Activated T-helper 2 cell treated with anti-CD3 and anti-CD28 coated beads, Interferon-gamma antibody, Interleukin-2, Interleukin-4, amounts not matched to agents 10 μg/mL and 5 μg/mL and 100 μg/mL, durations not matched to agents 14 hours and 24 hours and 36 hours (primary cell): ENCODE measurements at regions of chr5 and their contacts with region 1.

Region 1: GRCh38 chr5:131068893-131069643 is 96.0 kb downstream of the HINT1 start:
- DNase-seq: peak; percentile 69
- H3K4me3 Mint-ChIP-seq: peak overlapping the region; percentile 69
- H3K27ac Mint-ChIP-seq: peak overlapping the region; percentile 89
- H3K4me1 Mint-ChIP-seq: peaks cover 53% of the 10 kb centered on the region
- H3K27me3 Mint-ChIP-seq: no peaks in the 10 kb centered on the region

Region 2: DNA sequence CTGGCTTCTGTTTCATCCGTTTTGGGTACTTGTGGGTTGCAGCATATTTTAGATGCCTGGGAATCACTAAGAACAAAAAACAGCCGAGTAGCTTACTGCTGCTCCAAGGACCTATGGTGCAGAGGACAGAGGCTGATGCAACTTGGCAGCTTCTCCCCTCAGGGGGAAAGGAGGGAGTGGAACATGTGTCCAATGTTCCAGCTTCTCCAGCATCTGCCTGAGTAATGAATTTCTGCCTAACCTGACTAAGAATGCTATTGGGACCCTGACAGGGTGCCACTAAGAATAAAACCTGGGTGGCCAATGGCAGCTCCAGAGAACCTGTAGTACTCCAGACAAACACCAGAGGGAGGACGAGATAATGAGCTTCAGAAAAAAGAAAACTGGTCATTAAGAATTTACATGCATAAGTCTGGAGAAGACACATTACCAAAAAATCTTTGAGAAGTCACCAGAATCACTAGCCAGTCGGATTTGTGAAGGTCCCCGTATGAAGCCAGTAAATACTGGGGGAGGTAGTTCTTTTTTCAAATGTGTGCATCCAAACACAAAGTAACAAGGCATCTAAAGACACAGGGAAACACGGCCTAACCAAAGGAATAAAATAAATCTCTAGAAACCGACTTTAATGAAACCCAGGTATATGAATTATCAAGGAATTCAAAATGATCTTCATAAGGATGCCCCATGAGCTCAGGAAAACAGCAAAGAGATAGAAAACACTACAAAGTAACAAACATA is 197.6 kb before region 1 on chr5:
- intact Hi-C with region 1: loop called (anchors 5 kb)
- DNase-seq: peak; percentile 13
- H3K4me3 Mint-ChIP-seq: no peak overlapping the region
- H3K27ac Mint-ChIP-seq: no peak overlapping the region
- H3K4me1 Mint-ChIP-seq: peaks cover 4% of the 10 kb centered on the region
- H3K27me3 Mint-ChIP-seq: no peaks in the 10 kb centered on the region

Region 3: DNA sequence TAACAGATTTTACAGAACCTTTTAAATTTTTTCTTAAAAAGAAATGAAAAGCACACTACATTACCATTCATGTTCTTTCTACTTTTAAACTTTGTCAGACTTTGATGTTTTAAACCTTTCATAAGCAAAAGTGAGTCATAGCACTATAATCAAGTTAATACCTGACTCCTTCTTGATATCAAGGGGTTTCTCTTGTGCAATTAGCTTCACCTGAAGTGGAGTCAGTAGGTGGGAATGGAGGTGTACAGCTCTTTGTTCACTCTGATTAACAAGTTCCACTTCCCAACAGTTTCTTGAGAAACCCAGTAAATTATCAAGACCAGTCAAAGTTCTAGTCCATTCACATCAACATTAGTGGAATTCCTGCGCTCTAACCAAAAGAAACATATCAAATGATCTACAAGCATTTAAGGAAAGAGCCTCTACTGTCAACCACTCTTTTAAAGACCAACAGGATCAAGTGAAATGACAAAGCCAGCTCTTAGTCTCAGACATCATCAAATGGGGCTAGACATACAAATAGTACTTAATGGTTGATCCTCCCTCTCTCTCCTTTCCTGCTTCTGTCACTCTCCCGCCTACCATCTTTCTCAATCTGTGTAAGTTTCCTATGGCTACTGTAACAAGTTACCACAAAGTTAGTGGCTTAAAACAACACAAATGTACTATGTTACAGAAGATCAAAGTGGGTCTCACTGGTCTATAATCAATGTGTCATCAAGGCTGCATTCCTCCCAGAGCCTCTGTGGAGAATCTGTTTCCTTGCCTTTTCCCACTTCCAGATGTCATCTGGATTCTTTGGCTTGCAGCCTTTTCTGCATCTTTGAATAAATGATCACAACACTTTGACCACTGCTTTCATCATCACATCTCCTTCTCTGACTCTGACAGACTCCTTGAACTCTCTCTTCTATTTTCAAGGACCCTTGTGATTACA is 28.0 kb after region 1 on chr5:
- intact Hi-C with region 1: loop called (anchors 1 kb)
- DNase-seq: no peak
- H3K4me3 Mint-ChIP-seq: no peak overlapping the region
- H3K27ac Mint-ChIP-seq: no peak overlapping the region
- H3K4me1 Mint-ChIP-seq: peaks cover 9% of the 10 kb centered on the region
- H3K27me3 Mint-ChIP-seq: peaks cover 3% of the 10 kb centered on the region

Region 4: GRCh38 chr5:131270809-131271208 is 201.7 kb after region 1 on chr5:
- intact Hi-C with region 1: loop called (anchors 5 kb)
- DNase-seq: no peak
- H3K4me3 Mint-ChIP-seq: peak overlapping the region; percentile 78
- H3K27ac Mint-ChIP-seq: peak overlapping the region; percentile 74
- H3K4me1 Mint-ChIP-seq: peaks cover 49% of the 10 kb centered on the region
- H3K27me3 Mint-ChIP-seq: no peaks in the 10 kb centered on the region

Region 5: GRCh38 chr5:131417240-131417869 is 348.3 kb after region 1 on chr5:
- intact Hi-C with region 1: loop called (anchors 10 kb)
- DNase-seq: peak; percentile 66
- H3K4me3 Mint-ChIP-seq: peak overlapping the region; percentile 16
- H3K27ac Mint-ChIP-seq: peak overlapping the region; percentile 56
- H3K4me1 Mint-ChIP-seq: peaks cover 32% of the 10 kb centered on the region
- H3K27me3 Mint-ChIP-seq: no peaks in the 10 kb centered on the region